Activated CD4-positive, alpha-beta T cell treated with anti-CD3 and anti-CD28 coated beads, Interleukin-2, amount 10 ng/mL, durations not matched to agents 24 days and 14 days (primary cell): ENCODE measurements at regions of chr12 and their contacts with region 1.

Region 1: DNA sequence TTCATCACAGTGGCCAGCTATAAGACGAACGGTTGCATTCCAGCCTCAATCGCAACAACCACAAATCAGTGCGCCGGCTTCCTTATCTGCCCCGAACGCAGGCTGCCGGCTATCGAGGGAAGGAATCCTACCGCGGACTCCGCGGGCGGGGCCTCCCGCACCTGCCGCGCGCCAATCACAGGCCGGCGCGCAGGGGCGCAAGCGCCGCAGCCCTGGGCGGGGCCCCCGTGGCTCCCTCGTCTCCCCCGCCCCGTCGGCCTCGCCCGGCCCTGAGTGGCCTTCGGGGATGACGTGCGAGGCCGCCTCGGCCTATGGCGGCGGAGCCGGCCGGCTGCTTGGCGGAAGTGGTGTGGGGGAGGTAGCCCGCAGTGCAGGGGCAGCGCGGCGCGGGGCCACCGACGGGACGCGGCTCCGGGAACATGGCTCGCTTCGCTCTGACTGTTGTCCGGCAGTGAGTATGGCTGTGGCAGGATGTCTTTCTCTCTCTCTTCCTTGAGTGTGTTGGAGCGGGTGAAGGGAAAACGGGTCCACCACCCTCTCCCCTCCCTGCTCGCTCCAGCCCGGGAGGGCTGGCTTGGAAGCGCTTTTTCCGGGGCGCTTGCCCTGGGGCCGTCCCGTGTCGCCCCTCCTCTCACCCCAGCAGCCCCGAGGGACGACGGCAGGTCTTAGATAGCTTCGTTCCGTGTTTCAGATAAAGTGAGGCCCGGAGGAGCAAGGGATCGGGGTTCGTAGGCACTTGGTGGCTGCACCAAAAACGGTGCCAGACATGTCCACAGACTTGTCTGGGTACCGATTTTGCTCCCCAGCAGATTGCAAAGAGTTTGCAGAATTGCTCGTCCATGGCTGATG is at the start of gene TIGAR:
- DNase-seq: peak; percentile 98
- H3K4me3 Mint-ChIP-seq: peak within 1 kb of the TSS; percentile 90
- H3K27ac Mint-ChIP-seq: peak within 1 kb of the TSS; percentile 92
- H3K4me1 Mint-ChIP-seq: peaks cover 33% of the 10 kb centered on the region
- H3K27me3 Mint-ChIP-seq: no peaks in the 10 kb centered on the region
- total RNA-seq, gene TIGAR: 13.4 TPM in 2 replicates

Region 2: GRCh38 chr12:4346931-4347330 is 25.9 kb after region 1 on chr12:
- intact Hi-C with region 1: no loop called
- DNase-seq: no peak
- H3K4me3 Mint-ChIP-seq: no peak overlapping the region
- H3K27ac Mint-ChIP-seq: no peak overlapping the region
- H3K4me1 Mint-ChIP-seq: peaks cover 4% of the 10 kb centered on the region
- H3K27me3 Mint-ChIP-seq: no peaks in the 10 kb centered on the region

Region 3: GRCh38 chr12:4506870-4507269 is 185.8 kb after region 1 on chr12:
- intact Hi-C with region 1: loop called (anchors 10 kb)
- DNase-seq: peak; percentile 83
- H3K4me3 Mint-ChIP-seq: peak overlapping the region; percentile 55
- H3K27ac Mint-ChIP-seq: peak overlapping the region; percentile 59
- H3K4me1 Mint-ChIP-seq: peaks cover 20% of the 10 kb centered on the region
- H3K27me3 Mint-ChIP-seq: no peaks in the 10 kb centered on the region

Region 4: DNA sequence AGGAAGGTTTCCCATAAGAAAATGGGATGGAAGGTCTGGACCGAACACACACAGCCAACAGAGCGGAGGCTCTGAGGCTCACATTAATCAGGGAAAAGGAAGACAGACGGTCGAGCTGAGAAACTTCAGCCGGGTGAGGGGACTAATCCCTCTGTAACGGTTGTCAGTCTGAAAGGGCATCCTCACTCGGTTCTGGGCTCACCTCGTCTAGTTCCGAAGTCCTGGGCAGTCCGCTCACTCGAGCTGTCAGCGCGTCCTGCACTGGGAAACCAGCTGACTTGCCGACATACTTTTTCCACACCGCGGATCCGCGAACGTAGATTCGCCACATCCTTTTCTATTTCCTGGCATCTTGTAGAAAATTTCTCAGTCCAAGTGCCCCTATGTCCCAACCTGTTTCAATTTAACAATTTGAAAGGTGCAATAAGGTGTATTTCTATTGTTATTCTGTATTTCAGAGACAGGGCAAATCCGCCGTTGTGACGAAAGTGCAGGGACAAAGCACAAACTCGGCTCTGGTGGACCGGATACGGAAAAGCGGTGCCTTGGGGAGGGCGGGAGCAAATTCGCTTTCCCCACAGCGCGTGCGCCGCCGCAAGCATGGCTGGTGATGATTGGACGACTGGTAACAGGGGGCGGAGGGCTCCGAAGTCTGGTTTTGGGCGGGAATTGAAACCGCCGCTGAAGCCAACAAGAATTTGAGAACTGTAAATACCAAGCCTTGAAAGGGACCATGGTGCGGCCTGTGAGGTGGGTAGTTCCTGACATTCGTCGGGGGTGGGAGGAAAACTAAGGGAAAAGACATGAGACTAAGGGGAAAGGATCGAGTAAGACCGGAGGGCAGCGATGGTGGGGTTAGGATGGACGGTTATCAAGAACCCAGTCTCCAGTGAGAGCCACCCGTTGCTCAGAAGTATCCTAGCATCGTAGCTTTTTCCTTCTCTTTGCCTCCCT is 217.4 kb after region 1 on chr12 and contains the start of gene RAD51AP1:
- intact Hi-C with region 1: loop called (anchors 1 kb)
- DNase-seq: peak; percentile 98
- H3K4me3 Mint-ChIP-seq: peak within 1 kb of the TSS; percentile 96
- H3K27ac Mint-ChIP-seq: peak within 1 kb of the TSS; percentile 93
- H3K4me1 Mint-ChIP-seq: peaks cover 29% of the 10 kb centered on the region
- H3K27me3 Mint-ChIP-seq: no peaks in the 10 kb centered on the region
- total RNA-seq, gene RAD51AP1: 31.4 and 35.8 TPM in 2 replicates

Region 5: DNA sequence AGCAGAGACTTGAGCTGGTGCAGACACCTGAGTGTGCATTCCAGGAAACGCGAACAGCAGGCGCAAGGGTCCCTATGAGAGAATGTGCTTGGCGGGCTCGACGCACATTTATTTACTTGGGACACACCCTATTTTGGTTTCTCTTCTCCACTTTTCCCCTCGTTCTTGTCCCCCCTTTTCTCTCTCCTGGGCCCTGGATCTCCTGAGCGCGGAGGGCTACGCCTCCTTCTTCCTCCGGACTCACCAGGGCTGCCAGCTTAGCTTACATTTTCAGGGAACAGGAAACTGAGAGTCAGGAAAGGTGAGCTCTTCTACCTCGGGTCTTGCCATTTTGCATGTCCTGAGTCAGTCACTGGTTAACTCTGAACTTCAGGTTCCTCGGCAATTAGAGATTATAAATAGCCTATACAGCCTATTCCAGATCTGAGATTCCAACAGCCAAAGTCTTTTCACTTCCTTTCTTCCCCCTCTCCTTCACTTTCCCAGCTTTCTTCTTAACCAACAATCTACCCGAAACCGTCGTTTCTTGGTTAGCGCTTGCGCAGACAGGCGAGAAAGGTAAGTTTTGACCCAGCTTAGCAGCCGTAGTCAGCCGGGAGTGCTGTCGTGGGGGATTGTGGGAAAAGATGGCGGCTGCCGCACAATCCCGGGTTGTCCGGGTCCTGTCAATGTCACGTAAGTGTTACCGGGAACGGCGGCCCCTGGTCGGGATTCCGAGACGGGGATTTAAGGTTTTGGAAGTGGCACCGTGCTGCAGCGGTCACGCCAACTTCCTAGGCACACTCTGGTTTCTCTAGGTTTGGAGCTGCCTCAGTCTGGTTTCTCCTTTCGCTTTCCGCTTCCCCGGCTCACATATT is 327.7 kb after region 1 on chr12 and contains the starts of genes AKAP3 and NDUFA9:
- intact Hi-C with region 1: loop called (anchors 2 kb)
- DNase-seq: peak; percentile 94
- H3K4me3 Mint-ChIP-seq: peak within 1 kb of the TSS; percentile 98
- H3K27ac Mint-ChIP-seq: peak within 1 kb of the TSS; percentile 96
- H3K4me1 Mint-ChIP-seq: peaks cover 36% of the 10 kb centered on the region
- H3K27me3 Mint-ChIP-seq: peaks cover 5% of the 10 kb centered on the region
- total RNA-seq, gene AKAP3: 0.42 and 1.1 TPM in 2 replicates
- total RNA-seq, gene NDUFA9: 130 and 139 TPM in 2 replicates